Activated B cell treated with CpG ODN at 0.5 μM for 24 hours (primary cell): ENCODE measurements at regions of chr7 and their contacts with region 1.

Region 1: GRCh38 chr7:111741811-111742240 is 179.5 kb upstream of the IMMP2L start:
- DNase-seq: no peak
- ATAC-seq: peak; percentile 87
- H3K4me3 Mint-ChIP-seq: no peak overlapping the region
- H3K27ac Mint-ChIP-seq: no peak overlapping the region
- H3K4me1 Mint-ChIP-seq: no peaks in the 10 kb centered on the region
- H3K27me3 Mint-ChIP-seq: peaks cover 3% of the 10 kb centered on the region
- CTCF ChIP-seq: no peak

Region 2: GRCh38 chr7:111752022-111752582 is 10.3 kb after region 1 on chr7:
- CTCF ChIA-PET with region 1: interaction called, 10 read pairs
- POLR2A ChIA-PET with region 1: no interaction called
- intact Hi-C with region 1: no loop called
- DNase-seq: no peak
- ATAC-seq: peak; percentile 52
- H3K4me3 Mint-ChIP-seq: no peak overlapping the region
- H3K27ac Mint-ChIP-seq: no peak overlapping the region
- H3K4me1 Mint-ChIP-seq: no peaks in the 10 kb centered on the region
- H3K27me3 Mint-ChIP-seq: peaks cover 5% of the 10 kb centered on the region
- CTCF ChIP-seq: peak; percentile 35

Region 3: GRCh38 chr7:111796671-111797070 is 54.8 kb after region 1 on chr7:
- CTCF ChIA-PET with region 1: no interaction called
- POLR2A ChIA-PET with region 1: no interaction called
- intact Hi-C with region 1: no loop called
- DNase-seq: no peak
- ATAC-seq: no peak
- H3K4me3 Mint-ChIP-seq: no peak overlapping the region
- H3K27ac Mint-ChIP-seq: no peak overlapping the region
- H3K4me1 Mint-ChIP-seq: no peaks in the 10 kb centered on the region
- H3K27me3 Mint-ChIP-seq: no peaks in the 10 kb centered on the region
- CTCF ChIP-seq: no peak

Region 4: GRCh38 chr7:112495810-112496462 is 754.1 kb after region 1 on chr7:
- CTCF ChIA-PET with region 1: interaction called, 15 read pairs
- POLR2A ChIA-PET with region 1: no interaction called
- intact Hi-C with region 1: loop called (anchors 1 kb)
- DNase-seq: no peak
- ATAC-seq: no peak
- H3K4me3 Mint-ChIP-seq: no peak overlapping the region
- H3K27ac Mint-ChIP-seq: no peak overlapping the region
- H3K4me1 Mint-ChIP-seq: no peaks in the 10 kb centered on the region
- H3K27me3 Mint-ChIP-seq: no peaks in the 10 kb centered on the region
- CTCF ChIP-seq: no peak

Region 5: GRCh38 chr7:112898432-112899290 is 1156.8 kb after region 1 on chr7:
- CTCF ChIA-PET with region 1: no interaction called
- POLR2A ChIA-PET with region 1: no interaction called
- intact Hi-C with region 1: loop called (anchors 1 kb)
- DNase-seq: no peak
- ATAC-seq: peak; percentile 60
- H3K4me3 Mint-ChIP-seq: no peak overlapping the region
- H3K27ac Mint-ChIP-seq: no peak overlapping the region
- H3K4me1 Mint-ChIP-seq: peaks cover 3% of the 10 kb centered on the region
- H3K27me3 Mint-ChIP-seq: no peaks in the 10 kb centered on the region
- CTCF ChIP-seq: peak; percentile 45

Region 6: DNA sequence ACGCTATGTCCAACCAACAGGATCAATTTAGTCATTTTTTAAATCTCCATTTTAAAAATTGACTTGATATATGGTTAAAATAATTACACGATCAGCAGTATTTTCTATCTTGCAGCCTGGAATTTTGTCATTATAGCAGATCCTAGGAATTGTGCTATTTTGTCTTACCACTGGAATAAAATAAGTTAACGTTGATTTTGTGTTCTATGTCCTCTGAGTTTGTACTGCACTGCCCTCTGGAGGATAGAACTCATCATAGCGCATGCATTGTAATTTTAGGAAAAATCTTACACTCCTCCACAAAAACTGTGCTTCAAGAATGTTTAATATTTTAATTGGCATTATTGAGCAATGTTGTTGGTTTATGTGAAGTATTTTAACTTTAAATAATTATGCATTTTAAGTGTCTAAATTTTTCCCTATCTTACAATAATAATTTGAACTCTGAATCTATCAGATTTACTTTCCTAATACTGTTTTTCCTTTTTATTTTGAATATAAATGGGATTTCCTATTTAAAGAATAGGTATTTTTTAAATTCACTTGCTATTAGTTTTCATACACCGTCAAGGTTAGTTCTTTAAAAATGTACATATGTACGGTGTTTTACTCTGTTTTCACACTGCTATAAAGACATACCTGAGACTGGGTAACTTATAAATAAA is 1956.9 kb after region 1 on chr7:
- CTCF ChIA-PET with region 1: no interaction called
- POLR2A ChIA-PET with region 1: no interaction called
- intact Hi-C with region 1: loop called (anchors 5 kb)
- DNase-seq: no peak
- ATAC-seq: no peak
- H3K4me3 Mint-ChIP-seq: no peak overlapping the region
- H3K27ac Mint-ChIP-seq: no peak overlapping the region
- H3K4me1 Mint-ChIP-seq: no peaks in the 10 kb centered on the region
- H3K27me3 Mint-ChIP-seq: no peaks in the 10 kb centered on the region
- CTCF ChIP-seq: no peak